Heart left ventricle (tissue), 16 donors: ENCODE measurements at regions of chr9 and their contacts with region 1.

Region 1: DNA sequence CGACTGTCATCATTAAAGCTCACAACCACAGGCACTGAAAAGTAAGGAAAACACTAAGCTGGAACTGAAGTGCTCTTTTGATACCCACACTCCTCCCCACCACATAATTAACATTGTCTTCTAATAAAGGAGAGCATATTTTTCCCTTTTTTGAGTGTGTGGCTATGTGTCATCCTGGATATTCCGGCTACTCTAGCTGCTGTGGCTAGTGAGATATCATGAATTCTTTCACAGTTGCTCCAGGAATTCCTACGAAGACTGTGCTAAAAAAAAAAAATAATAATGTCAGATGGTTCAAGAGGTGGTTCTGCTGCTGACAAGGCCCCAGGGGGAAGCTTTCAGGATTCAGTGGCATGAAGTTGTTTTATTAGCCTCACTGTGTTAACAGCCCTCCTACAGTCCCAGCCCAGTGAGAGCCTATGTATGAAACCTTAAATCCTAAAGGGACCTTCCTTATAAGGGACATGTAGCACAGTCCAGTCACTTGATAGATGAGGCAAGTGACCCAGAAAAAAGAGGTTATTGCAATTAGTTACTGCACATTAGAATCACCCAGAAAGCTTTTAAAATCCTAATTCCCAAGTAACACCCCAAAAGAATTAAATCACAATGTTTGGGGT is 46.6 kb downstream of the TMEM252 start:
- DNase-seq: no peak
- ATAC-seq: peak in 2 of 4 donors; percentile 16 to 57
- H3K4me3 ChIP-seq: no peak overlapping the region
- H3K27ac ChIP-seq: peak overlapping the region in 6 of 12 donors; percentile 25 to 67 (median 52)
- H3K4me1 ChIP-seq: peaks cover 0 to 65% (median 24%) of the 10 kb centered on the region in 12 donors
- H3K27me3 ChIP-seq: no peaks in the 10 kb centered on the region
- CTCF ChIP-seq: no peak
- POLR2A ChIP-seq: no peak

Region 2: GRCh38 chr9:68416936-68417564 is 77.0 kb before region 1 on chr9:
- intact Hi-C with region 1: no loop called
- DNase-seq: no peak
- ATAC-seq: no peak
- H3K4me3 ChIP-seq: no peak overlapping the region
- H3K27ac ChIP-seq: peak overlapping the region; percentile 34 to 93 (median 86)
- H3K4me1 ChIP-seq: peaks cover 0 to 52% (median 17%) of the 10 kb centered on the region in 12 donors
- H3K27me3 ChIP-seq: no peaks in the 10 kb centered on the region
- CTCF ChIP-seq: peak in 7 of 12 donors; percentile 10 to 30 (median 23)
- POLR2A ChIP-seq: no peak

Region 3: GRCh38 chr9:68437785-68438184 is 56.3 kb before region 1 on chr9:
- intact Hi-C with region 1: loop called in 1 of 10 experiments (anchors 5 kb)
- DNase-seq: peak; percentile 67 to 87 (median 81)
- ATAC-seq: peak; percentile 96 to 97 (median 96)
- H3K4me3 ChIP-seq: no peak overlapping the region
- H3K27ac ChIP-seq: peak overlapping the region in 10 of 12 donors; percentile 6 to 78 (median 50)
- H3K4me1 ChIP-seq: peaks cover 0 to 25% (median 16%) of the 10 kb centered on the region in 12 donors
- H3K27me3 ChIP-seq: no peaks in the 10 kb centered on the region
- CTCF ChIP-seq: no peak
- POLR2A ChIP-seq: no peak

Region 4: GRCh38 chr9:68515326-68515901 is 21.3 kb after region 1 on chr9:
- intact Hi-C with region 1: no loop called
- DNase-seq: no peak
- ATAC-seq: peak; percentile 41 to 77 (median 68)
- H3K4me3 ChIP-seq: no peak overlapping the region
- H3K27ac ChIP-seq: peak overlapping the region in 3 of 12 donors; percentile 7 to 55 (median 54)
- H3K4me1 ChIP-seq: peaks cover 0 to 28% (median 10%) of the 10 kb centered on the region in 12 donors
- H3K27me3 ChIP-seq: no peaks in the 10 kb centered on the region
- CTCF ChIP-seq: no peak
- POLR2A ChIP-seq: no peak

Region 5: GRCh38 chr9:68546596-68547390 is 52.7 kb after region 1 on chr9:
- intact Hi-C with region 1: loop called in 1 of 10 experiments (anchors 10 kb)
- DNase-seq: no peak
- ATAC-seq: peak; percentile 51 to 87 (median 67)
- H3K4me3 ChIP-seq: peak overlapping the region in 1 of 12 donors; percentile 23
- H3K27ac ChIP-seq: peak overlapping the region in 6 of 12 donors; percentile 7 to 91 (median 34)
- H3K4me1 ChIP-seq: peaks cover 0 to 43% (median 7%) of the 10 kb centered on the region in 12 donors
- H3K27me3 ChIP-seq: no peaks in the 10 kb centered on the region
- CTCF ChIP-seq: no peak
- POLR2A ChIP-seq: no peak

Region 6: GRCh38 chr9:68577774-68578591 is 83.9 kb after region 1 on chr9:
- intact Hi-C with region 1: no loop called
- DNase-seq: no peak
- ATAC-seq: no peak
- H3K4me3 ChIP-seq: no peak overlapping the region
- H3K27ac ChIP-seq: no peak overlapping the region
- H3K4me1 ChIP-seq: peaks cover 0 to 4% (median 0%) of the 10 kb centered on the region in 12 donors
- H3K27me3 ChIP-seq: no peaks in the 10 kb centered on the region
- CTCF ChIP-seq: no peak
- POLR2A ChIP-seq: no peak